Pancreas (tissue), 10 donors: ENCODE measurements at regions of chr2 and their contacts with region 1.

Region 1: GRCh38 chr2:39696838-39697237 is 31.1 kb downstream of the TMEM178A start:
- DNase-seq: no peak
- ATAC-seq: peak; percentile 67 to 81 (median 78)
- H3K4me3 ChIP-seq: no peak overlapping the region
- H3K27ac ChIP-seq: no peak overlapping the region
- H3K4me1 ChIP-seq: peaks cover 0 to 7% (median 0%) of the 10 kb centered on the region in 3 donors
- H3K27me3 ChIP-seq: no peaks in the 10 kb centered on the region
- CTCF ChIP-seq: peak in 3 of 4 donors; percentile 11 to 16 (median 12)

Region 2: DNA sequence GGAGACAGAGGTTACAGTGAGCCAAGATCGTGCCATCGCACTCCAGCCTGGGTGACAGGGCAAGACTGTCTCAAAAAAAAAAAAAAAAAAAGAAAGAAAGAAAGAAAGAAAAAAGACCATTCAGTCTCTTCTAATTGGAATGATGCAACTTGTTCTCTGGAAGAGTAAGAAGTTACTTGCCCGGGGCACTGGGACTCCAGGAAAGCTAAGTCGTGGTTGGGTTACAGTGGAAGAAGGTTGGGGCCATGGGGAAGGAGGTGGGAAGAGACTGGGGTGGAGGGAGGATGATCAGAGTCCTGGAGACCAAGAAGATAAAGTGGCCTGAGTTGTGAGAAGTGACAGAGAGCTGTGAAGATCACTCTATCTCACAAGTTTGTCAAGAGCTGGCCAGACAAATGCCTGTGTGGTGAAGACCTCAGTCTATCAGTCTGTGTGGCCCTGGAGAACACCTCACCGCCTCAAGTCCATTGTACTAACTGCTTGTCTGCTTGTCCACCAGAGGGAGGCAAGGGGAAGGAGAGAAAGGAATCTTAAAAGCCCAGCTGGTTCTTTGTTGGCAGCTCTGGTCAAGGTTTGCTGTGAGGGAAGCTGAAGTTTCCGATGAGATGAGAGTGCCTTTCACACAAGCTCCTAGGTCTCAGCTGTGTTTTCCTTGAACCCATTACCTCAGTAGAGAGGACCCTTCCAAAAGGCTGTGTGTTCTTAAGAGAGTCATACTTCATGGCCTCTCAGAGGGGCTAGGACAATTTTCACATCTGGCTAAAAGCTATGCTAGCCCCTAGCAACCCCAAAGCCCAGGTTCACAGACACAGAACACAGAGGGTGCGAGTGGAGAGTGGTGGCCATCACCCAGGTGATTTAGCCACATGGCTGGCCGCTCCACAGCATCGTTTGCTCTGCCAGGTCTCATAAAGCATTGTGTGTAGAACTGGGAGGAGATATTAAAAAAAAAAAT is 103.1 kb before region 1 on chr2:
- intact Hi-C with region 1: loop called in 1 of 3 experiments (anchors 10 kb)
- DNase-seq: peak in 3 of 6 donors; percentile 62 to 67 (median 62)
- ATAC-seq: peak; percentile 89 to 100 (median 98)
- H3K4me3 ChIP-seq: no peak overlapping the region
- H3K27ac ChIP-seq: no peak overlapping the region
- H3K4me1 ChIP-seq: no peaks in the 10 kb centered on the region
- H3K27me3 ChIP-seq: no peaks in the 10 kb centered on the region
- CTCF ChIP-seq: peak; percentile 38 to 45 (median 40)